CD8-positive, alpha-beta T cell (primary cell): ENCODE measurements at regions of chr11 and their contacts with region 1.

Region 1: DNA sequence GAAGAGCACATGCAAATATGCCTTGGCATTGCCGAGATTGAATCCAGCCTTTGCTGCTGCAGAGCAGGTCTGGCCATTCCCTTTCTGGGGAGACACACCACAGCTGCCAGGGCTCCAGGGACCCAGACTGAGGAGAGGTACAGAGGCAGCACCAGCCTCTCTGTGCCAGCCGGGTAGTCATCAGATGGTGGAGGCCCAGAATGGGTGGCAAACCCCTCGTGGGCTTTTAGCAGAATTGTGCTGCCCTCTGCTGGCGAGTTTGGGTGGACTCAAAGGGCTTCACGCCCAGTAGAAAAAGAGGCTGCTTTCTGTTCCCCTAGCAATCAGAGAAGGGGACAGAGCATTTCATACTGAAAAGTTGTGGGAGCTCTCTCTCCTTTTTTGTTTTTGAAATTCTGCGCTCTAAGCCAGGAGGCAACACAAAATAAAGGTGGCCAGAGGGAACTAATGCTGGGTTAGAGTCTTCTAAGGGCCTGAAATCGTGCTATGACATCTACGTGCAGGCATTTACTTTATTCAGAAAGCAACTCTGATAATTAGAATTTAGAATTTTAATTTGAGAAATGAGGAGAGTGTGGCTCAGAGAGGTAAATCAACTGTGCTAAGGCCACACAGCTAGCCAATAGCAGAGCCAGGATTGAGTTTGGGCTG is 158.8 kb upstream of the NAV2 start:
- DNase-seq: peak; percentile 27 to 78 (median 65)
- ATAC-seq: peak; percentile 62
- H3K4me3 ChIP-seq: no peak overlapping the region
- H3K4me3 Mint-ChIP-seq: no peak overlapping the region
- H3K27ac ChIP-seq: no peak overlapping the region
- H3K27ac Mint-ChIP-seq: no peak overlapping the region
- H3K4me1 ChIP-seq: no peaks in the 10 kb centered on the region
- H3K4me1 Mint-ChIP-seq: peaks cover 4% of the 10 kb centered on the region
- H3K27me3 ChIP-seq: peaks cover 0 to 2% of the 10 kb centered on the region in 2 experiments
- H3K27me3 Mint-ChIP-seq: peaks cover 13% of the 10 kb centered on the region
- CTCF ChIP-seq: peak; percentile 59

Region 2: GRCh38 chr11:19071255-19071654 is 482.6 kb before region 1 on chr11:
- CTCF ChIA-PET with region 1: interaction called, 11 read pairs
- POLR2A ChIA-PET with region 1: no interaction called
- intact Hi-C with region 1: loop called in 1 of 2 experiments (anchors 1 kb)
- DNase-seq: peak in 8 of 9 experiments; percentile 15 to 81 (median 46)
- ATAC-seq: peak; percentile 90
- H3K4me3 ChIP-seq: no peak overlapping the region
- H3K4me3 Mint-ChIP-seq: peak overlapping the region; percentile 38
- H3K27ac ChIP-seq: no peak overlapping the region
- H3K27ac Mint-ChIP-seq: no peak overlapping the region
- H3K4me1 ChIP-seq: peaks cover 4% of the 10 kb centered on the region
- H3K4me1 Mint-ChIP-seq: peaks cover 5% of the 10 kb centered on the region
- H3K27me3 ChIP-seq: no peaks in the 10 kb centered on the region
- H3K27me3 Mint-ChIP-seq: peaks cover 18% of the 10 kb centered on the region
- CTCF ChIP-seq: peak; percentile 90

Region 3: GRCh38 chr11:19259487-19260345 is 294.1 kb before region 1 on chr11:
- CTCF ChIA-PET with region 1: interaction called, 21 read pairs
- POLR2A ChIA-PET with region 1: no interaction called
- intact Hi-C with region 1: loop called in 1 of 2 experiments (anchors 1 kb)
- DNase-seq: peak; percentile 24 to 73 (median 63)
- ATAC-seq: peak; percentile 75
- H3K4me3 ChIP-seq: no peak overlapping the region
- H3K4me3 Mint-ChIP-seq: no peak overlapping the region
- H3K27ac ChIP-seq: no peak overlapping the region
- H3K27ac Mint-ChIP-seq: no peak overlapping the region
- H3K4me1 ChIP-seq: no peaks in the 10 kb centered on the region
- H3K4me1 Mint-ChIP-seq: no peaks in the 10 kb centered on the region
- H3K27me3 ChIP-seq: no peaks in the 10 kb centered on the region
- H3K27me3 Mint-ChIP-seq: peaks cover 4% of the 10 kb centered on the region
- CTCF ChIP-seq: peak; percentile 90

Region 4: DNA sequence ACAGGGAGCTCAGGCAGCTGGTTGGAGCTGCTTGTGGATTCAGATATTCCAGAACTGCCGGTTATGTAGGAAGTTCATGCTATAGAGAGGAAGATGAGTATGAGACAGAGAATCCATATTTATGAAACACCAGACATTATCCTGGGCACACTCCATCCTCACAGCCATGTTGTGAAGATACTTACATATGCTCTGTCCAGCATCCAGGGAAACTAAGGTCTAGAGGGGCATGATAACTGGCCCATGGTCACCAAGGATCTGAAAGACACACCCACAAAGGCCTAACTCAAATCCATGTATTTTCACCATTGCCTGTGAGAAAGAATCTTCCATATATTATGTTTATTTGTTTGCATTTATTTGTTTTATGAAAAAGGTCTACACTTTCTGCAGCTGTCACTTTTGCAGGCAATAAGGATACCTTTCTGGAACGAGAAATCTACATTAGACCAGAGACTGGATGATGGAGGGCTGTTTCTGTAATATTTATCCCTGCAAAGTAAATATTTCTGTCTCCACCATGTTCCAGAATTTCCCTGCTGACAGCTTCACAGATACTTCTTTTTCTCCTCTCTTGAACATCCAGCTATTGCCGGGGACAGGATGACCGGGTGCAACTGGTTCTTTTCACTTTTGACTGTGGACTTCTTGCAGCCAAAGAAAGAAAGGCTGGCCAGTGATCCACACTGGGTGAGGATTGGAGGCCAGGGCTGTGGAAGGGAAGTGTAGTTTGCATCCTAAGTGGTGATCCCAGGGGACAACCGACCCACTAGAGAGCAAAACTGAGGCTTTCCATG is 13.0 kb after region 1 on chr11:
- CTCF ChIA-PET with region 1: interaction called, 27 read pairs
- POLR2A ChIA-PET with region 1: no interaction called
- intact Hi-C with region 1: no loop called
- DNase-seq: no peak
- ATAC-seq: no peak
- H3K4me3 ChIP-seq: no peak overlapping the region
- H3K4me3 Mint-ChIP-seq: no peak overlapping the region
- H3K27ac ChIP-seq: no peak overlapping the region
- H3K27ac Mint-ChIP-seq: no peak overlapping the region
- H3K4me1 ChIP-seq: no peaks in the 10 kb centered on the region
- H3K4me1 Mint-ChIP-seq: no peaks in the 10 kb centered on the region
- H3K27me3 ChIP-seq: peaks cover 0 to 3% of the 10 kb centered on the region in 2 experiments
- H3K27me3 Mint-ChIP-seq: peaks cover 14% of the 10 kb centered on the region
- CTCF ChIP-seq: no peak

Region 5: DNA sequence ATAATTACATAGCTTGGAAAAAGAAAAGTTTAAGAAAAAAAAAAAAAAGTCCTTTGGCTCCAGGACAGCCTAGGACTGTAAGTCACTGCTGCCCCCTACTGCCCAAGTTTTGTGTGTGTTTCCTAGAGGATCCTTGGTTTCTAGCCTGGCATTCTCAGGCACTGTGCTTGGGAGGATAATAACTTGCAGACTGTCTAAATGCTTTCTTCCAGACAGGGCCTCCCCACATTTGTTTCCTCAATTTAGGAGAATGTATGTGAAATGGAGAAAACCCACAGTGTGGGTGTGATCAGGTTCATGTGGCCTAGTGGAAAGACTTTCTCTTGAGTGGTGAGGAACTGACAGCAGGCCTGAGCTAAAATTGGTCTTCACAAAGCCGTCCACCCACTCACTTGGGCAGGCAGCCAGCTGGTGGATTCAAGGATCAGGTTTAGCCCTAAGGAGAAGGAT is 349.8 kb after region 1 on chr11:
- CTCF ChIA-PET with region 1: no interaction called
- POLR2A ChIA-PET with region 1: no interaction called
- intact Hi-C with region 1: loop called in 1 of 2 experiments (anchors 2 kb)
- DNase-seq: peak in 7 of 9 experiments; percentile 14 to 53 (median 42)
- ATAC-seq: no peak
- H3K4me3 ChIP-seq: no peak overlapping the region
- H3K4me3 Mint-ChIP-seq: no peak overlapping the region
- H3K27ac ChIP-seq: no peak overlapping the region
- H3K27ac Mint-ChIP-seq: no peak overlapping the region
- H3K4me1 ChIP-seq: no peaks in the 10 kb centered on the region
- H3K4me1 Mint-ChIP-seq: no peaks in the 10 kb centered on the region
- H3K27me3 ChIP-seq: no peaks in the 10 kb centered on the region
- H3K27me3 Mint-ChIP-seq: no peaks in the 10 kb centered on the region
- CTCF ChIP-seq: peak; percentile 31